ENCODE measurements at regions of chr6 and their contacts with region 1.

Region 1: GRCh38 chr6:158999666-159000403 is at the start of gene RSPH3:
- DNase-seq: peak; percentile 97 to 98 (median 98)
- H3K4me3 ChIP-seq: peak within 1 kb of the TSS; percentile 90 to 92 (median 91)
- H3K27ac ChIP-seq: peak within 1 kb of the TSS; percentile 88 to 92
- H3K4me1 ChIP-seq: peaks cover 0 to 8% (median 0%) of the 10 kb centered on the region in 3 donors
- H3K27me3 ChIP-seq: no peaks in the 10 kb centered on the region
- CTCF ChIP-seq: peak; percentile 21
- total RNA-seq, gene RSPH3: 20.2 TPM

Region 2: GRCh38 chr6:158826801-158827573 is 172.8 kb before region 1 on chr6:
- intact Hi-C with region 1: no loop called
- DNase-seq: no peak
- H3K4me3 ChIP-seq: no peak overlapping the region
- H3K27ac ChIP-seq: no peak overlapping the region
- H3K4me1 ChIP-seq: no peaks in the 10 kb centered on the region
- H3K27me3 ChIP-seq: no peaks in the 10 kb centered on the region
- CTCF ChIP-seq: no peak

Region 3: DNA sequence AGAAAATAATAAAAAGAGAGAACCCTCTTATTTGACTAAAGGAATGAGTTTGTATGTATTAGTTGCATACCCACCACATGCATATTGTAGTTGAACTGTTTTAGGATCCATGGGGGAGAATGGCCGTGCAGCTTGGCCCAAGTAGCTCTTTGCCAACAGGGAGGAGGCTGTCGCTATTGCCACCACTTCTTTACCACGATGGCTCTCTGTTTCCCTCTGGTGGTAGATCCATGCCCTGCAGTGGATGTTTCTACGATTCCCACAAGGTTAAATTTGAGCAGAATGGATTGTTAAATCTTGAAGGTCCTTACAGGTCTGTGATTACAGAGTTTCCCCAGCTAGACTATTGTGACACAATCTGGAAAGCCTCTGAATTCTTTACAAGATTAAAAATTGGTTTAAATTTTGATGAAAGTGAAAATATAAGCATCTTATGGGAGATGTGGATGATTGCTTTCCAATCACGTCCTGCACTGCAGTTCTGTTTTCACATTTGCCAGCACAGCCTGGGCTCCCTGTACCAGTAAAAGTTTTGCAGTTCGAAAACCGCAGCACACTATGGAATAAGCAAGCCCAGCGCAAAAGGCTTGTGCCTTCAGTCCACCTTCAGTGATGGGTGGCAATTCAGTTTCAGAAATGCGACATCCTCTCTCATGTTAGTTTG is 135.0 kb after region 1 on chr6:
- intact Hi-C with region 1: loop called (anchors 10 kb)
- DNase-seq: peak in 4 of 5 donors; percentile 57 to 78 (median 68)
- H3K4me3 ChIP-seq: no peak overlapping the region
- H3K27ac ChIP-seq: no peak overlapping the region
- H3K4me1 ChIP-seq: no peaks in the 10 kb centered on the region
- H3K27me3 ChIP-seq: no peaks in the 10 kb centered on the region
- CTCF ChIP-seq: peak; percentile 93

Measured in kidney (tissue), 22 donors.